CD4-positive, alpha-beta T cell (primary cell): ENCODE measurements at regions of chr5 and their contacts with region 1.

Region 1: DNA sequence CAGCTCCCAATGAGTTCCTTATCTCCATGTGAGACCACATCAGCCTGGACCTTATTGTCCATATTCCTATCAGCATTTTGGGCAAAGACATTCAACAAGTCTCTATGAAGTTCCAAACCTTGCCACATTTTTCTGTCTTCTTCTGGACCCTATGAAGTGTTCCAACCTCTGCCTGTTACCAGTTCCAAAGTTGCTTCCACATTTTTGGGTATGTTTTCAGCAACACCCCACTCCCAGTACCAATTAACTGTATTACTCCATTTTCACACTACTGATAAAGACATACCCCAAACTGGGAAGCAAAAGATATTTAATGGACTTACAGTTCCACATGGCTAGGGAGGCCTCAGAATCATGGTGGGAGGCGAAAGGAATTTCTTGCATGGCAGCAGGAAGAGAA is 548.5 kb downstream of the CHSY3 start:
- DNase-seq: no peak
- ATAC-seq: no peak
- H3K4me3 ChIP-seq: no peak overlapping the region
- H3K4me3 Mint-ChIP-seq: no peak overlapping the region
- H3K27ac ChIP-seq: no peak overlapping the region
- H3K27ac Mint-ChIP-seq: no peak overlapping the region
- H3K4me1 ChIP-seq: no peaks in the 10 kb centered on the region
- H3K4me1 Mint-ChIP-seq: no peaks in the 10 kb centered on the region
- H3K27me3 ChIP-seq: no peaks in the 10 kb centered on the region
- H3K27me3 Mint-ChIP-seq: no peaks in the 10 kb centered on the region
- CTCF ChIP-seq: no peak

Region 2: GRCh38 chr5:130427222-130427955 is 25.4 kb before region 1 on chr5:
- CTCF ChIA-PET with region 1: no interaction called
- POLR2A ChIA-PET with region 1: no interaction called
- intact Hi-C with region 1: loop called in 1 of 2 experiments (anchors 1 kb)
- DNase-seq: no peak
- ATAC-seq: no peak
- H3K4me3 ChIP-seq: no peak overlapping the region
- H3K4me3 Mint-ChIP-seq: no peak overlapping the region
- H3K27ac ChIP-seq: no peak overlapping the region
- H3K27ac Mint-ChIP-seq: no peak overlapping the region
- H3K4me1 ChIP-seq: no peaks in the 10 kb centered on the region
- H3K4me1 Mint-ChIP-seq: no peaks in the 10 kb centered on the region
- H3K27me3 ChIP-seq: no peaks in the 10 kb centered on the region
- H3K27me3 Mint-ChIP-seq: peaks cover 4% of the 10 kb centered on the region
- CTCF ChIP-seq: no peak